PC-3 (cell line): ENCODE measurements at regions of chr6 and their contacts with region 1.

Region 1: DNA sequence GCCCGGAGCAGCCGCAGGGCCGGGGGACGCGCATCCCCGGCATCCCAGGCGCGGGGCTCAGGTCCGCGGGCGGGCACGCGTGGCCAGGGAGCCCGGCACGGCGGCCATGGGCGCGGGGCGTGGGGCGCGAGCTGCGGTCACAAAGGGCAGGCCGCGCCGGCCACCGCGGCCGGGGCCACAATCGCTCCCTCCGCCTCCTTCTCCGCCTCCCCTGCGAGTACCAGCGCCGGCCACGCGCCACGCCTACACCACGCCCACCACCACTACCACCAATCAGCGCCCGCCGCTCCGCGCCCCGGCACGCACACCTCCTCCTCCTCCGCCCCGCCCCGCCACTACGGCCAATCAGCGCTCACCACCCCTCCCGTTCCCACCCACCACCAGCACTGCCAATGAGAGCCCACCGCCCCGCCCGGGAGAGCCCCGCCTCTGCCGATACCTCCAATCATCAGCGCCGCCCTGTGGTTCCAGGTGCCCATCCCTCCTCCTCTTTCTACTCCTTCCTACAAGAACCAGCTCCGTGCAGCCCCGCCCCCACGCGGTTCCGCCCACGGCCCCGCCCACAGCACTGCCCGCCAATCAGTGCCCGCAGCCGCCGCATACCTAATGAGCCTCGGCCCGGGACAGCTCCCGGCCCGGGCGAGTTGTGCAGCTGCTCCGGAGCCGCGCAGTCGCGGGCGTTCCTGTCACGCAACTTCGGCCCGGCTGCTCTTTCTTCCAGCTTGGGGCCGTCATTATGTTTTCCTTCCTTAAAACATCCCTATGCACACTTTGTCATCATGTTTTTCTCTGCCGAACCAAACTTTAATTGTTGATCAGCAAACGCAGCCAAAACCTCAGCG is at the start of gene RPS6KA2:
- DNase-seq: peak; percentile 94
- ATAC-seq: peak; percentile 83
- H3K4me3 ChIP-seq: peak within 1 kb of the TSS; percentile 87
- H3K27ac ChIP-seq: peak within 1 kb of the TSS; percentile 49
- H3K4me1 ChIP-seq: peaks cover 16% of the 10 kb centered on the region
- H3K27me3 ChIP-seq: no peaks in the 10 kb centered on the region
- CTCF ChIP-seq: no peak
- total RNA-seq, gene RPS6KA2: 5.1 and 7.9 TPM in 2 replicates

Region 2: DNA sequence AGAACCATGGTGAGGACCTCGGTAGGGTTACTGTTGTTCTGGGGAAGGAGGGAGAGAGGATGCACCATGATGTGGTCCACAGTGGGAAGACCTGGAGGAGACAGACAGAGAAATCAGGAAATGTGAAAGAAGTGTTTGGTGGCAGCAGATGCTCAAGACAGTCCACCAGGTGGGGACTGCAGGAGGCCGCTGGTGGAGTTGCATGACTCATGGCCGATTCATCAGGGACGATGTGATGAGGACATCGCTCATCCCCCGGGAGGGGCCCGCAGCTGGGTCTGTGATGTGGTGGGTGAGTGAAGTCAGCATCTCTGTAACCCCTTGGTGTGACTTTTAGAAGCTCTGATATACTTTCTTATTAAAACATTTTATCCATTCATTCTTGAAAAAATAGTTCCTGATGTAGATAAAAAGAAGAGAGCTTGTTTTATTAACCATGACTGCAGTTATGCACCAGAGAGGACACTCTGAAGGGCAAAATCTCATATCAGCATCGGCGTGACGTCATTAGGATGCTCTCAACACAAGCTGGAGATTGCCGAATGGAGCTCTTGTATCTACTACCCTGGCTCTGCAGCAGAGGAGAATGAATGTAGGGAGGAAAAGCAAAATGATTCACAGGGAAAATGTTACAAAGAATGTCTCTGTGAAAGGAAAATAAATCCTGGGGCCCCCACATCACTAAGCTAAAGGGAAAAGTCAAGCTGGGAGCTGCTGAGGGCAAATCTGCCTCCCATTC is 112.0 kb before region 1 on chr6:
- CTCF ChIA-PET with region 1: interaction called, 4 read pairs
- POLR2A ChIA-PET with region 1: no interaction called
- intact Hi-C with region 1: loop called (anchors 1 kb)
- DNase-seq: peak; percentile 88
- ATAC-seq: peak; percentile 96
- H3K4me3 ChIP-seq: no peak overlapping the region
- H3K27ac ChIP-seq: no peak overlapping the region
- H3K4me1 ChIP-seq: peaks cover 8% of the 10 kb centered on the region
- H3K27me3 ChIP-seq: no peaks in the 10 kb centered on the region
- CTCF ChIP-seq: peak; percentile 66

Region 3: GRCh38 chr6:166556871-166557322 is 70.4 kb before region 1 on chr6:
- CTCF ChIA-PET with region 1: interaction called, 4 read pairs
- POLR2A ChIA-PET with region 1: no interaction called
- intact Hi-C with region 1: loop called (anchors 1 kb)
- DNase-seq: peak; percentile 96
- ATAC-seq: peak; percentile 93
- H3K4me3 ChIP-seq: peak overlapping the region; percentile 53; the same call in 1 of the 2 replicates
- H3K27ac ChIP-seq: peak overlapping the region; percentile 93
- H3K4me1 ChIP-seq: peaks cover 43% of the 10 kb centered on the region
- H3K27me3 ChIP-seq: no peaks in the 10 kb centered on the region
- CTCF ChIP-seq: no peak

Region 4: DNA sequence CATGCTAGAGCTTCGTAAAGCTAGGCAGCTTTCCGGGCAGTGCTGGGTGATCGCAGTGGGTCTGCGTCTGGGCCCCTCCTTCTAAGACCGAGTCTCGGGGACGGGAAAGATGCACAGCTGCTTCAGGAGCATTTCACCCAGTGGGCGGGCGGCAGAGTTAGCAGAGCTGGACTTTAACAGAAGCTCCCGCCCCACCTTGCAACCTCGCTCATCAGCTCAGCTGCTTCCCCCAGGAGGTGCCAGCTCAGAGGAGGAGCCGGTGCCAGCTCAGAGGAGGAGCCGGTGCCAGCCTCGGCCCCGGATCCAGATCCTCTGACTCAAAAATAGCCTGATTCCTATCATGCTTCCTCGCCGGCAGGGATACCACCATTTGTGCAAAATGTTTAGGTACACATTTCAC is 94.3 kb after region 1 on chr6:
- CTCF ChIA-PET with region 1: no interaction called
- POLR2A ChIA-PET with region 1: no interaction called
- intact Hi-C with region 1: loop called (anchors 1 kb)
- DNase-seq: peak; percentile 71
- ATAC-seq: peak; percentile 74
- H3K4me3 ChIP-seq: peak overlapping the region; percentile 30
- H3K27ac ChIP-seq: peak overlapping the region; percentile 62
- H3K4me1 ChIP-seq: peaks cover 49% of the 10 kb centered on the region
- H3K27me3 ChIP-seq: no peaks in the 10 kb centered on the region
- CTCF ChIP-seq: no peak

Region 5: GRCh38 chr6:166956444-166957086 is 329.3 kb after region 1 on chr6 and contains the start of gene RNASET2:
- CTCF ChIA-PET with region 1: no interaction called
- POLR2A ChIA-PET with region 1: no interaction called
- intact Hi-C with region 1: loop called (anchors 10 kb)
- DNase-seq: peak; percentile 83
- ATAC-seq: peak; percentile 86
- H3K4me3 ChIP-seq: peak within 1 kb of the TSS; percentile 85
- H3K27ac ChIP-seq: no peak within 1 kb of the TSS
- H3K4me1 ChIP-seq: peaks cover 7% of the 10 kb centered on the region
- H3K27me3 ChIP-seq: no peaks in the 10 kb centered on the region
- CTCF ChIP-seq: no peak
- total RNA-seq, gene RNASET2: 51.8 and 77.4 TPM in 2 replicates